ENCODE measurements at regions of chr12 and their contacts with region 1.

Region 1: DNA sequence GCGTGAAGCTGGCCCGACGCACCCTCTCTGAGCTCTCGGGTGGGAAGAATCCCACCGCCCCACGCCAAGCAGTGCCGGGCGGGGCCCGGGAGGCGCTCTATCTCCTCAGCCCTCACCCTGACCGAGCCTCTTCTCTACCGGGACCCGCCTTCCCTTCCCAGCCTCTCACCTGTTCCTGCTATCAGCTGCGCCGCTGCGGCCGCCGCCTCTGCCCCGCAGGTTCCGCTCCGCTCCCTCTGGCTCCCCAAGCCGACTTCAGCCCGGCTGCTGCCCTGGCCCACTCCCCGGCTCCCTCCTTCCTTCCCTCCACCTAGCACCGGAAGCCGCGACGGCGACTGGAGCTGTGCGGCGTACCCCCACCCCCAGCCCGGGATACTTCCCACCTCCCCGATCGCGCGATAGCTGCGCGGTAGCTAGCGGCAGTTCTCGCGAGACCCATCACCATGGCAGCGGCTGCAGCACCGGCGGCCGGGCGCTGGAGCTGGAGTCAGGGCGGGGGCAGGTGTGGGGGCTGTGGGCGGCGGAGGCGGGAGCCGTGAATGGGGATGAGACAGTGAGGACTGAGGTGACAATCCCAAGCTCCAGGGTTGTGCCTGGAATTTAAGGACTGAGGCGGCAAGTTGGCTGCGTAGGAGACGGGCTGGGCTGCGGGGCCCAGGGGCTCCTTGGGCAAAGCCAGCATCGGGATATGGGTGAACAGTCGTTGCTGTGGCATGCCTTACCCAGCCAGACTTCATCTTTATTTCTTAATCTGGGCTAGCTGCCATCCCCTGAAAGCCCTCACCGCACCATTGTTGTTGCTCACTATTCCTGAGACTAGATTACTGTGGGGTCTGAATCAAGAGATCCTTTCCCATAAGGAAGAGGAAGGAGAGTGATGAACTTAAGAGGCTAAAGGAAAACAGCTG is at the start of gene ARF3:
- DNase-seq: peak; percentile 95
- H3K4me3 Mint-ChIP-seq: peak within 1 kb of the TSS; percentile 86
- H3K27ac Mint-ChIP-seq: peak within 1 kb of the TSS; percentile 83
- H3K4me1 Mint-ChIP-seq: peaks cover 28% of the 10 kb centered on the region
- H3K27me3 Mint-ChIP-seq: no peaks in the 10 kb centered on the region
- total RNA-seq, gene ARF3: 110 to 121 TPM

Region 2: GRCh38 chr12:48970702-48971334 is 13.4 kb after region 1 on chr12:
- CTCF ChIA-PET with region 1: interaction called, 202 read pairs
- POLR2A ChIA-PET with region 1: interaction called, 6 read pairs
- intact Hi-C with region 1: loop called (anchors 1 kb)
- DNase-seq: no peak
- H3K4me3 Mint-ChIP-seq: no peak overlapping the region
- H3K27ac Mint-ChIP-seq: no peak overlapping the region
- H3K4me1 Mint-ChIP-seq: peaks cover 37% of the 10 kb centered on the region
- H3K27me3 Mint-ChIP-seq: peaks cover 42% of the 10 kb centered on the region

Region 3: DNA sequence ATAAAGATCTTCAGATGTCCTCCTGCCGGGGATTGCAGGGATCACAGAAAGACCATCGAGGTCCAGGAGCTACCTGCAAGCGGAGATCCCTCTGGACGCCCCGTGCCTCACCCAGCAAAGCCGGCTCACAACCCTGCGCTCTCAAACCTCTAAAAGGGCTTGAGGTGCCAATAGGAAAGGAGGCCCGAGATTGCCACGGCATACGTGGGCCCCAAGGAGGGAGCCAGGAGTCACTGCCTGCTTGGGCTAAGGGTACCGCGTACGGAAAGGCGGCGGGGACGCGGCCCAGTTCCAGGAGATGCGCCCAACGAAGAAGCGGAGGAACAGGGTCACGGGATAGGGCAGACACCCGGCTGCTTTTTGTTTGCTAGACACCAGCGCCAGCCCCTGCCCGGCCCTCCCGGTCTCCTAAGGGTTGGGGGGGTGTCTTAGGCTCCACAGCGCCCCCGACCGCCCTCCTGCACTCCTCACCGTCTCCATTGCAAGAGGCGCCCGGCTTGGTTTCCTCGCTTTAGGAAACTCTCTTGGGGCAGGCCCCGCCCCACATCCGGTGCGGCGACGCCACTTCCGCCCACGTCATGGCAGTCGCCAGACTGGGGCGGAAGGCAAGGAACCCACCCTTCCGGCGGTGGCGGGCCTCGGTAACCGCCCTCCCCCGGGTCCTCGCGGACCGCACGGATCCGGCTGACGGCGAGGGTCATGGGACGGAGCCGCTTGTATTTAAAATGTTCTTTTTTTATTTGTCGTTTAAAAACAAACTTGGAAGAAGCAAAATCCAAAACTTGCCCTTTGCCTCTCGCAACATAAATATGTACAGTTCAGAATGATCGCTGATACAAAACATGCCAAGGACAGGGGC is 61.1 kb after region 1 on chr12 and contains the start of gene PRKAG1:
- CTCF ChIA-PET with region 1: no interaction called
- POLR2A ChIA-PET with region 1: interaction called, 3 read pairs
- intact Hi-C with region 1: loop called (anchors 1 kb)
- DNase-seq: peak; percentile 97
- H3K4me3 Mint-ChIP-seq: peak within 1 kb of the TSS; percentile 95
- H3K27ac Mint-ChIP-seq: peak within 1 kb of the TSS; percentile 92
- H3K4me1 Mint-ChIP-seq: peaks cover 40% of the 10 kb centered on the region
- H3K27me3 Mint-ChIP-seq: no peaks in the 10 kb centered on the region
- total RNA-seq, gene PRKAG1: 52.0 to 55.8 TPM